Dorsolateral prefrontal cortex (tissue), 120 donors: ENCODE measurements at regions of chr9 and their contacts with region 1.

Region 1: GRCh38 chr9:135500525-135501358 is at the start of gene MRPS2:
- DNase-seq: peak; percentile 65 to 92 (median 82)
- H3K4me3 ChIP-seq: peak within 1 kb of the TSS; percentile 62 to 100 (median 94)
- H3K27ac ChIP-seq: peak within 1 kb of the TSS in 57 of 59 donors; percentile 16 to 90 (median 77)
- H3K27me3 ChIP-seq: no peaks in the 10 kb centered on the region
- CTCF ChIP-seq: peak; percentile 54 to 94 (median 84)
- total RNA-seq, gene MRPS2: 19.8 to 41.3 (median 28.2) TPM

Region 2: GRCh38 chr9:135379540-135380267 is 121.0 kb before region 1 on chr9:
- intact Hi-C with region 1: no loop called
- DNase-seq: peak in 5 of 10 donors; percentile 25 to 69 (median 37)
- H3K4me3 ChIP-seq: no peak overlapping the region
- H3K27ac ChIP-seq: peak overlapping the region in 13 of 59 donors; percentile 10 to 69 (median 38)
- H3K27me3 ChIP-seq: peaks cover 0 to 4% (median 0%) of the 10 kb centered on the region in 45 donors
- CTCF ChIP-seq: no peak

Region 3: GRCh38 chr9:135478858-135479468 is 21.8 kb before region 1 on chr9:
- intact Hi-C with region 1: loop called in 1 of 2 experiments (anchors 2 kb)
- DNase-seq: peak in 3 of 10 donors; percentile 10 to 55 (median 54)
- H3K4me3 ChIP-seq: peak overlapping the region; percentile 37 to 84 (median 66)
- H3K27ac ChIP-seq: peak overlapping the region in 42 of 59 donors; percentile 0 to 85 (median 56)
- H3K27me3 ChIP-seq: no peaks in the 10 kb centered on the region
- CTCF ChIP-seq: peak in 20 of 56 donors; percentile 6 to 38 (median 18)

Region 4: DNA sequence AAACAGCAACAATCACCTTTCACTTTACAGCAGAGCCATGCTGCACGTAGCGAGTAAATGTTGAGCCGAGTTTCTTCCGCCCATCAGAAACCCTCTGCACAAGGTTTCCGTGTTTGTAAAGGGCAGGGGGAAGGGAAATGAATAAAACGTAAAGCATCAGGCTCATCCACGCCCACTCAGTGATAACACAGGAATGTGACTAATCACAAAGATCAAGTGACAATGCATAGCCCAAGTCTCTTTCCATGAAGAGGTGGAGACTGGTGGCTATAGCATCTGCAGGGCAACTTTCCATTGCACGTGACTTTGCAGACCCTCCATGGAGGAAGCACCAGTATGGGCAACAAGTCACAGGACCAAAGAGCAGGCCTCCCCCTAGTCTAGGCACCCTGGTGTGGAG is 350.0 kb after region 1 on chr9:
- intact Hi-C with region 1: no loop called
- DNase-seq: no peak
- H3K4me3 ChIP-seq: no peak overlapping the region
- H3K27ac ChIP-seq: no peak overlapping the region
- H3K27me3 ChIP-seq: no peaks in the 10 kb centered on the region
- CTCF ChIP-seq: no peak

Region 5: GRCh38 chr9:135926402-135927194 is 425.9 kb after region 1 on chr9:
- intact Hi-C with region 1: no loop called
- DNase-seq: no peak
- H3K4me3 ChIP-seq: no peak overlapping the region
- H3K27ac ChIP-seq: no peak overlapping the region
- H3K27me3 ChIP-seq: no peaks in the 10 kb centered on the region
- CTCF ChIP-seq: no peak